Transverse colon (tissue), 4 donors: ENCODE measurements at regions of chr6 and their contacts with region 1.

Region 1: GRCh38 chr6:47787620-47788497 is 6.0 kb downstream of the OPN5 start:
- DNase-seq: peak; percentile 47
- H3K4me3 ChIP-seq: no peak overlapping the region
- H3K27ac ChIP-seq: no peak overlapping the region
- H3K4me1 ChIP-seq: peaks cover 0 to 7% (median 1%) of the 10 kb centered on the region in 4 donors
- H3K27me3 ChIP-seq: peaks cover 27% of the 10 kb centered on the region
- CTCF ChIP-seq: peak; percentile 75 to 89 (median 82)
- EP300 ChIP-seq: no peak
- POLR2A ChIP-seq: no peak

Region 2: GRCh38 chr6:48765352-48765961 is 977.6 kb after region 1 on chr6:
- in situ Hi-C with region 1: loop called in 3 of 4 experiments (anchors 25 kb)
- intact Hi-C with region 1: no loop called
- DNase-seq: no peak
- H3K4me3 ChIP-seq: no peak overlapping the region
- H3K27ac ChIP-seq: no peak overlapping the region
- H3K4me1 ChIP-seq: no peaks in the 10 kb centered on the region
- H3K27me3 ChIP-seq: no peaks in the 10 kb centered on the region
- CTCF ChIP-seq: peak in 3 of 5 experiments; percentile 19 to 25 (median 22)
- EP300 ChIP-seq: no peak
- POLR2A ChIP-seq: no peak

Region 3: DNA sequence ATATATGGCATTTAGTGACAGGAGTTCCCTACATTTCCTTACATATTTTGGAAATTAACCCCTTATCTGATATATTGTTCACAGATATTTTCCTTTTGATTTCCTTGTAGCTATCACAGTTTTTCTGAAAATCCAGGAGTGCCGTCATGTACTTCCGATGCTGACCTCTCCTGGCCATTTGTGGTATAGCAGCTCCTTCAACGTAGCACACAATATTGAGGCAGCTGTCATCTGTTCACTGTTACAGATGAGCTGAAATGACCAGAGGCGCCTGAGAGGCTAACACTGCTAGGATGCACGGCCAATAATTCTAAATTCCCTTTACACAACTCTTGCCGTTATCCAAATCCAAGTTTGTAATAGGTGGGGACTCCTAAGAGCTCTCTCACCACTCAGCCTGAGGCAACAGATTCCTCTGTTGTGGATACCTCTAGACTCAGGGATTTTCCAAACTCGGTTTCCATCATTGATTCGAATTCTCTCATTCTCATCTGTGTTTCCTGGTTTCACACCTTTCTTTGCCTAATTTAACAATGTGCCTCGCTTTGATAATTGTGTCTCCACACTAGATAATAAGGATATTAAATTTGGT is 1622.2 kb after region 1 on chr6:
- in situ Hi-C with region 1: loop called (anchors 25 kb)
- intact Hi-C with region 1: loop called (anchors 5 kb)
- DNase-seq: peak; percentile 74
- H3K4me3 ChIP-seq: no peak overlapping the region
- H3K27ac ChIP-seq: no peak overlapping the region
- H3K4me1 ChIP-seq: peaks cover 0 to 8% (median 0%) of the 10 kb centered on the region in 4 donors
- H3K27me3 ChIP-seq: no peaks in the 10 kb centered on the region
- CTCF ChIP-seq: peak; percentile 62 to 89 (median 82)
- EP300 ChIP-seq: no peak
- POLR2A ChIP-seq: no peak